AG04449 (cell line): ENCODE measurements at regions of chr15 and their contacts with region 1.

Region 1: DNA sequence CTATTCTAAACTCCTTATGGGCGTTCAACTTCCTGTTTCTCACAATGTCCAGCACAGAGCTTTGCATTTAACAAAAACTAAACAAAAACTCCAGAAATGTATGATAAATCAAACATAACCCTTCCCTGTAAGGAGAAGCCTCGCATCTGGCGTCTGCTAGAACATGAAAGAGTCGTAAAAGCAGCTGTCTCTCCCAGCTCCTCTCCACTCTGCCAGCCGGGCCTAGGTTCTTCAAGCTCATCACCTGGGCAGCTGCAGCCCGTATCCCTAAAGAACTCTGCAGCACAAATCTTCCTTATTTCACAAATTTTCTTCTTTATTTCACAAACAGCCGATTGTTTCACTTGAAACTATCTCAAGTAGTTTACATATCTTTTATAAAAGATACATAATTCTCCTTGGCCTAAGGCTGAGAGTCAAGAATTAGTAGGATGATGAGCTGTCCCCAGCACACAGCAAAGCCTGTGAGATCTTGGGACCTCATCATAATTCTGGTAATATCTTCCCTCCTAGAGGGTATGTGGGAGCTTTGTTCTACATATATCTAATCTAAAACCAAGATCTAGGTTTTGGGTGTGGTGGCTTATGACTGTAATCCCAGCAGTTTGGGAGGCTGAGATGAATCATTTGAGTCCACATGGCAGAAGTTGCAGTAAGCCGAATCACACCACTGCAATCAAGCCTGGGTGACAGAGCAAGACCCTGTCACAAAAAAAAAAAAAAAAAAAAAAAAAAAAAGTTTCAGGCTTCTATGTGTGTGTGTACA is 35.3 kb downstream of the ANXA2 start:
- DNase-seq: no peak
- H3K4me3 ChIP-seq: no peak overlapping the region
- CTCF ChIP-seq: no peak

Region 2: DNA sequence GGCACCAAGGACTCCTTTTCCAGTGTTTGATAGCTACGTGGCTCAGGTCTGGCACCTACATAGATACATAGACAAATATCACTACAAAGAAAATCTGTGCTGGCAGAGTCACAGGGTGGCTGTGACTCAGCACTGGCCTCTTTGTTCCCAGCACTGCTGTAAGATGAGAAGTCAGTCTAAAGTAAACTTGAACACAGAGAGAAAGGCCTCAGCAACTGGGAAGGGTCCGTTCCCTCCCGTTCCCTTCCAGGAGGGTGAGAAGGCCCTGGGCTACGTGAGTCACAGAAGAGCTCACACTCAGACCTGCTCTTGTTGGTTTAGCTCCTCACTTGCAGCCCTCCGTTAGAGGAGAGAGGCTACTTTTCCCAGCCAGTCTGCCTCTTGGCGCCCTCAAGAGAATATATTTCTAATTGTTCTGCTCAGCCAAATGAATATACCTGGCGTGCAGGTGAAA is 12.2 kb after region 1 on chr15:
- CTCF ChIA-PET with region 1: interaction called, 8 read pairs
- POLR2A ChIA-PET with region 1: interaction called, 24 read pairs
- DNase-seq: peak; percentile 85
- H3K4me3 ChIP-seq: no peak overlapping the region
- CTCF ChIP-seq: no peak